Ovary (tissue), 10 donors: ENCODE measurements at regions of chr16 and their contacts with region 1.

Region 1: DNA sequence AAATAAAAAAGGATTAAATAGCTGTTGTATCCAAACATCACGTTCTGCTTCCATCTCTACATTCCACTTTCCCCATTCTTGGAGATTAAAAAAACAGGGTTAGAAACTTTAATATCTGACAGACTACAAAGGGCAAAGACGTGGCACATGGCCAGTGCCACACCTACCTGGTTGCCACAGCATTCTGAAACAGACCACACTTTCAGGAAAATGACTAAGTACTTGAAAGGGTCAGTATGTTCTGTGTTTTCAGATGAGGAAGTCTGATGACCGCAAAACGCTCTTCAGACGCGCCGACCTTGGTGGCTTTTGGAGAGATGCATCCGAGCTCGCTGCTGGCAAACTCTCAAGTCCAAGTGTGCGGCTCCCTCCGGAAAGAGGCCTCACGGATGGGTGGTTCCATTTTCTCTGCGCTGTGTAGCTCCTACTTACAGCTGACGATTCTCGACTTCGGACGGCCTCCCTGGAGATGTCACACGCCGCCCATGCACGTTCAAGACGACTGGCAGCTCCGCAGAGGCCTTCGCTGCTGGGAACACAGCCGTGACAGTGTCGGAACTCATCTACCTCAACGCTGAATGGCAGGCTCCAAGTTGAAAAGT is 15.5 kb downstream of the MAP1LC3B start:
- DNase-seq: peak; percentile 67 to 81 (median 71)
- H3K4me3 ChIP-seq: no peak overlapping the region
- H3K27ac ChIP-seq: peak overlapping the region in 1 of 2 donors; percentile 55
- H3K4me1 ChIP-seq: no peaks in the 10 kb centered on the region
- H3K27me3 ChIP-seq: no peaks in the 10 kb centered on the region
- CTCF ChIP-seq: no peak
- EP300 ChIP-seq: no peak
- POLR2A ChIP-seq: no peak

Region 2: DNA sequence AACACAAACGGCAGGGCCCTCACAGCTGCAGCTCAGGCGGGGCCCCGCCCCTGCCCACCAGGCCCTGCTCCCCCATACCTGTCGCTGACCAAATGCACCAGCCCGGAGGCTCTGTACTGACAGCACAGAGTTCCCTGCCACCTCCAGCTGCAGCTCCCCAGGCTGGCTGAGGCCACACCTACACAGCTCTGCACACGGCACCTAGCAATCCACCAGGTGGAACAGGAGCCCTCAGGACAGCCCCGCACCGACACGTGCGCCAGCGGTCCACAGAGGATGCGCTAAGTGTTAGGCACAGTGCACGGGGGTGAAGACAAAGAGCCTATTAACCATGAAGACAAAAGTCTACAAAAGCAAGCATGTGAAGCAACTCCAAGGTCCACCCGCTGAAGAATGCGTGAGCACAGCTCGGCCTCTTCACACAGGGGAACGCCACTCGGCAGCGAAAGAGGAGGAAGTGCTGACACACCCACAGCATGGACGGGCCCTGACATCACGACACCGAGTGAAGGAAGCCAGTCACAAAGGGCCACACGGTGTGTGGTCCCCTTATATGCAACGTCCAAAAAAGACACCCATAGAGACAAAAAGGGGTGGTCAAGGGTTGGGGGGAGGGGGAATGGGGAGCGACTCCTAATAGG is 79.9 kb after region 1 on chr16:
- intact Hi-C with region 1: loop called in 1 of 4 experiments (anchors 5 kb)
- DNase-seq: peak in 2 of 5 donors; percentile 29 to 55
- H3K4me3 ChIP-seq: no peak overlapping the region
- H3K27ac ChIP-seq: no peak overlapping the region
- H3K4me1 ChIP-seq: peaks cover 20% of the 10 kb centered on the region
- H3K27me3 ChIP-seq: no peaks in the 10 kb centered on the region
- CTCF ChIP-seq: no peak
- EP300 ChIP-seq: no peak
- POLR2A ChIP-seq: no peak

Region 3: GRCh38 chr16:87698241-87698640 is 290.6 kb after region 1 on chr16:
- intact Hi-C with region 1: no loop called
- DNase-seq: no peak
- H3K4me3 ChIP-seq: no peak overlapping the region
- H3K27ac ChIP-seq: no peak overlapping the region
- H3K4me1 ChIP-seq: no peaks in the 10 kb centered on the region
- H3K27me3 ChIP-seq: no peaks in the 10 kb centered on the region
- CTCF ChIP-seq: no peak
- EP300 ChIP-seq: no peak
- POLR2A ChIP-seq: no peak